ENCODE measurements at regions of chr15 and their contacts with region 1.

Region 1: DNA sequence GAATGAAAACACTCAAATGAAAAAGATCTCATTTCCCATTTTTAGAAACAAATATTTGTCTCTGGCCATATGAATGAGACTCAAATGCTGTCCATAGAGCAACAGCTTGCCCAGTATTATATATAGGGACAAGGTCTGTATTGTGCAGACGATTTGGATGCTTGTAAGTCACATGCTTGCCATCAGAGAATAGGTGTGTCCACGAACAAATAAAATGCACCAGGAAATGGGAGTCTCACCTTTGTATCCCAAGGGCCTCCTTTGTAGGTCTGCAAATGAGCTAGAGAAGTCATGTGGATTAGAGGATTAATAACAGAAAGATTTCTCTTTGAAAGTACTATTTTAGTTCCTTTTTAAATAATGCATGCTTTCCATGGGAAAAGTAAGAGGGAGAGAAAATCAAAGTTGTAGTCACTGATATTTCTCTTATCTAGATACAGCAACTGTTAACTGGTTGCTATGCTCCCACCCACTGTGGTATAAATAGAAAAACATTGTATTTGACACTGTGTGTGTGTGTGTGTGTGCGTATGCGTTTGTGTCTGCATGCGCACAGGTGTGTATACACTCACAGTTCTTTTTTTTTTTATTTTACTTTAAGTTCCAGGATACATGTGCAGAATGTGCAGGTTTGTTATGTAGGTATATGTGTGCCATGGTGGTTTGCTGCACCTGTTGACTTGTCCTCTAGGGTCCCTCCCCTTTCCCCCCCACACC is 383.4 kb upstream of the ARRDC4 start:
- DNase-seq: no peak
- H3K4me3 ChIP-seq: no peak overlapping the region
- H3K27ac ChIP-seq: no peak overlapping the region
- H3K27me3 ChIP-seq: no peaks in the 10 kb centered on the region
- CTCF ChIP-seq: no peak

Region 2: DNA sequence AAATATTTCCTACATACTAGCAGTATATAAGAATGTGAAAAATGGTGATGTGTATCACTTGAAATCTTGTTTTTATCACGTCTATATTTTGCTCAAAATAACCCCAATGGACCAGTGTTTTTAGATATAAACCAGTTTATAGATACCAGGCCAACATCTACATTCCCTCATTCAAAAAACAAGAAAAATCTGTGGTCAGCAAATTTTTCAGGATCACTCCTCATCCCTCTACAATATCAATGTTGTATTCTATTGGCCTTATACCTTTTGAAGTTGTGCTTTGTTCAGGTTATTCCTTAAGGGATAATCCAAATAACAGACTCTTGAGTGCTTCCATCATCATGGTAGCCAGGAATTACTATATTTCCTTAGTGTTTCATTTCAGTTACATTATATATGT is 50.5 kb after region 1 on chr15:
- intact Hi-C with region 1: loop called in 1 of 2 experiments (anchors 5 kb)
- DNase-seq: no peak
- H3K4me3 ChIP-seq: no peak overlapping the region
- H3K27ac ChIP-seq: no peak overlapping the region
- H3K27me3 ChIP-seq: no peaks in the 10 kb centered on the region
- CTCF ChIP-seq: no peak

Region 3: DNA sequence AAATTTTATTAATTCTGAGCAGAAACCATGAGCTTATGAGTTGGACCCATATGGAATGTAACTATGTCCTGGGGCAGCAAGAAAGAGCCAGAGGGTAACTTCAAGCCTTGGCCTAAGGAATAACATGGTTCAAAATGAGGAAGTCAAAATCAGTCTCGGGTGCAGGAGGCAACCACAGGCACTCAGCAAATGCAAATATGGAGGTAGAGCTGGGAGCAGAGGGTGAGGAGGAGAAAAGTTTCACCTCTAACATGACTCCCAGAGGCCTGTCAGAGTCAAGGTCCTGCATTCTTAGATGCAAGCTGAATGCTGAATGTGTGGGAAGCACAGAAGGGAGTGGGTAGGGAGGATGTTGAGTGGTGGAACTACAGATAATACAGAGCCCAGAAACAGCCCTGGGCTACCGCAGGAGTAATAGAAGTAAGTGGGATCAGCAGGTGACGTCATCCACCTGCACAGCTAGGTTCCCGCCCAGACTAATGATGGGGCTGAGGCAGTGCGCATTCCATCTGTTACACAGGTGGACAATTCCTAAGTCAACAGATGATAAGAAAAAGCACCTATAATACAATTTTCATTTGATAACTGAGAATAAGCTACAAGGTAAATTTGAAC is 103.6 kb after region 1 on chr15:
- intact Hi-C with region 1: no loop called
- DNase-seq: no peak
- H3K4me3 ChIP-seq: no peak overlapping the region
- H3K27ac ChIP-seq: no peak overlapping the region
- H3K27me3 ChIP-seq: peaks cover 0 to 15% (median 0%) of the 10 kb centered on the region in 45 donors
- CTCF ChIP-seq: no peak